OCI-LY7 (cell line): ENCODE measurements at regions of chr7 and their contacts with region 1.

Region 1: DNA sequence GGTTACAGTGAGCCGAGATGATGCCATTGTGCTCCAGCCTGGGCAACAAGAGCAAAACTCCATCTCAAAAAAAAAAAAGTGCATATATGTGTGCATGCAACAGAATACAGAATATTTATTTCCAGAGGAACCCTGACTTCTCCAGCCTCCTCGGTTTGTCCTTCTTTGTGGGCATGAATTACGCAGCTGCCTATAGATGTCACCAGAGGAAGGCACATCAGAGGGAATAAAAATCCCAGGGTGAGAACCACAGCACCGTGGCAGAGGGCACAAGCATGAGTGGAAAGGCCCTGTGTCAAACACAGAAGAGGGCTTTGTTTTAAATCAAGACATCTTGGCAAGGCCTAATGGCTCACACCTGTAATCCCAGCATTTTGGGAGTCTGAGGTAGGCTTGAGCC is 24.4 kb upstream of the OCM2 start:
- DNase-seq: no peak
- H3K4me3 ChIP-seq: no peak overlapping the region
- H3K27ac ChIP-seq: no peak overlapping the region
- H3K4me1 ChIP-seq: no peaks in the 10 kb centered on the region
- CTCF ChIP-seq: no peak

Region 2: GRCh38 chr7:97499204-97499603 is 515.1 kb before region 1 on chr7:
- CTCF ChIA-PET with region 1: no interaction called
- POLR2A ChIA-PET with region 1: no interaction called
- intact Hi-C with region 1: loop called (anchors 5 kb)
- DNase-seq: peak; percentile 29
- H3K4me3 ChIP-seq: no peak overlapping the region
- H3K27ac ChIP-seq: no peak overlapping the region
- H3K4me1 ChIP-seq: no peaks in the 10 kb centered on the region
- CTCF ChIP-seq: peak; percentile 78

Region 3: GRCh38 chr7:97845622-97846203 is 168.6 kb before region 1 on chr7:
- CTCF ChIA-PET with region 1: no interaction called
- POLR2A ChIA-PET with region 1: no interaction called
- intact Hi-C with region 1: loop called (anchors 10 kb)
- DNase-seq: peak; percentile 38
- H3K4me3 ChIP-seq: no peak overlapping the region
- H3K27ac ChIP-seq: no peak overlapping the region
- H3K4me1 ChIP-seq: no peaks in the 10 kb centered on the region
- CTCF ChIP-seq: peak; percentile 83

Region 4: GRCh38 chr7:98211221-98211675 is 196.9 kb after region 1 on chr7 and contains the start of gene BHLHA15:
- CTCF ChIA-PET with region 1: no interaction called
- POLR2A ChIA-PET with region 1: no interaction called
- intact Hi-C with region 1: no loop called
- DNase-seq: peak; percentile 59
- H3K4me3 ChIP-seq: peak within 1 kb of the TSS; percentile 56
- H3K27ac ChIP-seq: no peak within 1 kb of the TSS
- H3K4me1 ChIP-seq: peaks cover 6% of the 10 kb centered on the region
- CTCF ChIP-seq: no peak
- total RNA-seq, gene BHLHA15: 0.69 and 1.2 TPM in 2 replicates